ENCODE measurements at regions of chr3 and their contacts with region 1.

Region 1: GRCh38 chr3:168489301-168489700 is 393.6 kb upstream of the GOLIM4 start:
- DNase-seq: no peak
- ATAC-seq: no peak
- H3K4me3 Mint-ChIP-seq: no peak overlapping the region
- H3K27ac Mint-ChIP-seq: no peak overlapping the region
- H3K4me1 Mint-ChIP-seq: no peaks in the 10 kb centered on the region
- H3K27me3 Mint-ChIP-seq: no peaks in the 10 kb centered on the region
- CTCF ChIP-seq: no peak

Region 2: DNA sequence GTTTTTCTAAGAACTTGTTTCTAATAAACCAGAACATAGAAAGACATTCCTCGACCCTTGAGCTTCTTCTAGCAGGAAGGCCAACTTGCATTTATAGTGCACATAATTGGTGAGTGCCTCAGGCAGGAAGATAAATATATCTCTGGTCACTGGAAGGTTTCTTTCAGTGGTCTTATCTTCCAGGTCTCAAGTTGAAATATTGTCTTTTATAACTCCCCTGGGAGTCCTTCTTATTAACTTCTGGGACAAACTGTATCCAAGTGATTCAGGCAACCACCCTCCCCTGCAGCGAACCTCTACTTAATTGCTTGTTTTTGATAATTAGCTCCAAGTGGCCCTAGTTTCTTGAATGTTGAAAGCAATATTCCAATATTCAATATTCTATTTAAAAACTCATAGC is 46.8 kb before region 1 on chr3:
- CTCF ChIA-PET with region 1: no interaction called
- POLR2A ChIA-PET with region 1: no interaction called
- intact Hi-C with region 1: loop called (anchors 5 kb)
- DNase-seq: no peak
- ATAC-seq: no peak
- H3K4me3 Mint-ChIP-seq: no peak overlapping the region
- H3K27ac Mint-ChIP-seq: no peak overlapping the region
- H3K4me1 Mint-ChIP-seq: no peaks in the 10 kb centered on the region
- H3K27me3 Mint-ChIP-seq: no peaks in the 10 kb centered on the region
- CTCF ChIP-seq: no peak